Activated CD4-positive, alpha-beta memory T cell treated with anti-CD3 and anti-CD28 coated beads for 36 hours (primary cell): ENCODE measurements at regions of chrX and their contacts with region 1.

Region 1: GRCh38 chrX:107776649-107777535 is 641 bp upstream of the NCBP2L start:
- DNase-seq: peak; percentile 84
- H3K4me3 Mint-ChIP-seq: peak overlapping the region; percentile 86
- H3K27ac Mint-ChIP-seq: no peak overlapping the region
- H3K4me1 Mint-ChIP-seq: peaks cover 7% of the 10 kb centered on the region
- H3K27me3 Mint-ChIP-seq: no peaks in the 10 kb centered on the region

Region 2: DNA sequence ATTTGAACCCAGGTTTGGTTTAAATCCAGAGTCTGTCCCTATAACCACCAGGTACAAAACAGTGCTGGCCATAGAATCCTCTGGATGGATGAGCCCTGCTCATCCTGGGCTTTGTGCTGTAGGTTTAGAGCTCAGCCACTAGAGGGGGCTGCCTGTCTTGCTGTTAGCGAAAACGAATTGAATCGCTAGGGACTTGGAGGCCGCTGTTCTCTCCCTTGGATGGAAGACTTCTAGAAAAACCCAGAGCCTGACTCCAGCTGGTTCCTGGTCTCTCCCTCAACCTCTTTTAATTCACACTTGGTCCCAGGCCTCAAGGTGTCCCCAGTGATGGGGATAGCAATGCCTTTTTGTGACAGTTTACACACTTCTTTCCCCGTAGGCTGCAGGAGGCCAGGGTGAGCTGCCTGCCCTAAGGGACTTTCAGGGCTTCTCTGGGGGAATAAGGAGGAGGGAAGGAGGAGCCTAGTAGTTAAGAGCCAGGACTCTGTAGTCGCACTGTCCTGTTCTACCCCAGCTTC is 882.4 kb before region 1 on chrX:
- CTCF ChIA-PET with region 1: no interaction called
- POLR2A ChIA-PET with region 1: no interaction called
- intact Hi-C with region 1: loop called (anchors 2 kb)
- DNase-seq: peak; percentile 54
- H3K4me3 Mint-ChIP-seq: no peak overlapping the region
- H3K27ac Mint-ChIP-seq: no peak overlapping the region
- H3K4me1 Mint-ChIP-seq: no peaks in the 10 kb centered on the region
- H3K27me3 Mint-ChIP-seq: no peaks in the 10 kb centered on the region

Region 3: DNA sequence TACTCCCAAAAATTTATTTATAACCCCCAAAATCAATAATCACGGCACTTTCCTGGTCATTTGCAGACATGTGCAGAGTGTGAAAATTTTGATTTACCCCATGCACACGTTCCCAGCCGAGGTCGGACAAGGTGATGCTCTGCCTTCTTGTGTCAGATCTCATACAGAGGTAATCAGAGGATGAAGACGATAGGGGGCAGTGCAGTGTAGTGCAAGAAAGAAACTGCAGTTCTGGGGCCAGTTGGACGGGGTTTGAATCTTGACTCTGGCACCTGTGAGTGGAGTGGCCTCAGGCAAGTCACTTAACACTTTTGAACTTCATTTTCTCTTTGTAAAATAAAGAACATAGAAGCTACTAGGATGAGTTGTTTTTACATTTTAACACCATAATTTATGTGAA is 239.1 kb before region 1 on chrX:
- CTCF ChIA-PET with region 1: interaction called, 24 read pairs
- POLR2A ChIA-PET with region 1: no interaction called
- intact Hi-C with region 1: loop called (anchors 1 kb)
- DNase-seq: peak; percentile 50
- H3K4me3 Mint-ChIP-seq: no peak overlapping the region
- H3K27ac Mint-ChIP-seq: no peak overlapping the region
- H3K4me1 Mint-ChIP-seq: no peaks in the 10 kb centered on the region
- H3K27me3 Mint-ChIP-seq: peaks cover 8% of the 10 kb centered on the region

Region 4: GRCh38 chrX:107662145-107662544 is 114.7 kb before region 1 on chrX:
- CTCF ChIA-PET with region 1: interaction called, 194 read pairs
- POLR2A ChIA-PET with region 1: no interaction called
- intact Hi-C with region 1: loop called (anchors 1 kb)
- DNase-seq: no peak
- H3K4me3 Mint-ChIP-seq: no peak overlapping the region
- H3K27ac Mint-ChIP-seq: no peak overlapping the region
- H3K4me1 Mint-ChIP-seq: peaks cover 8% of the 10 kb centered on the region
- H3K27me3 Mint-ChIP-seq: no peaks in the 10 kb centered on the region

Region 5: GRCh38 chrX:107741404-107741790 is 35.5 kb before region 1 on chrX:
- CTCF ChIA-PET with region 1: interaction called, 17 read pairs
- POLR2A ChIA-PET with region 1: no interaction called
- intact Hi-C with region 1: loop called (anchors 1 kb)
- DNase-seq: no peak
- H3K4me3 Mint-ChIP-seq: peak overlapping the region; percentile 79
- H3K27ac Mint-ChIP-seq: peak overlapping the region; percentile 95
- H3K4me1 Mint-ChIP-seq: peaks cover 39% of the 10 kb centered on the region
- H3K27me3 Mint-ChIP-seq: peaks cover 2% of the 10 kb centered on the region

Region 6: GRCh38 chrX:107894038-107894437 is 117.1 kb after region 1 on chrX:
- CTCF ChIA-PET with region 1: interaction called, 8 read pairs
- POLR2A ChIA-PET with region 1: no interaction called
- intact Hi-C with region 1: loop called (anchors 1 kb)
- DNase-seq: no peak
- H3K4me3 Mint-ChIP-seq: no peak overlapping the region
- H3K27ac Mint-ChIP-seq: no peak overlapping the region
- H3K4me1 Mint-ChIP-seq: no peaks in the 10 kb centered on the region
- H3K27me3 Mint-ChIP-seq: no peaks in the 10 kb centered on the region

Region 7: GRCh38 chrX:108177351-108178142 is 400.7 kb after region 1 on chrX:
- CTCF ChIA-PET with region 1: no interaction called
- POLR2A ChIA-PET with region 1: no interaction called
- intact Hi-C with region 1: no loop called
- DNase-seq: no peak
- H3K4me3 Mint-ChIP-seq: no peak overlapping the region
- H3K27ac Mint-ChIP-seq: no peak overlapping the region
- H3K4me1 Mint-ChIP-seq: no peaks in the 10 kb centered on the region
- H3K27me3 Mint-ChIP-seq: no peaks in the 10 kb centered on the region